Heart left ventricle (tissue), 16 donors: ENCODE measurements at regions of chr1 and their contacts with region 1.

Region 1: DNA sequence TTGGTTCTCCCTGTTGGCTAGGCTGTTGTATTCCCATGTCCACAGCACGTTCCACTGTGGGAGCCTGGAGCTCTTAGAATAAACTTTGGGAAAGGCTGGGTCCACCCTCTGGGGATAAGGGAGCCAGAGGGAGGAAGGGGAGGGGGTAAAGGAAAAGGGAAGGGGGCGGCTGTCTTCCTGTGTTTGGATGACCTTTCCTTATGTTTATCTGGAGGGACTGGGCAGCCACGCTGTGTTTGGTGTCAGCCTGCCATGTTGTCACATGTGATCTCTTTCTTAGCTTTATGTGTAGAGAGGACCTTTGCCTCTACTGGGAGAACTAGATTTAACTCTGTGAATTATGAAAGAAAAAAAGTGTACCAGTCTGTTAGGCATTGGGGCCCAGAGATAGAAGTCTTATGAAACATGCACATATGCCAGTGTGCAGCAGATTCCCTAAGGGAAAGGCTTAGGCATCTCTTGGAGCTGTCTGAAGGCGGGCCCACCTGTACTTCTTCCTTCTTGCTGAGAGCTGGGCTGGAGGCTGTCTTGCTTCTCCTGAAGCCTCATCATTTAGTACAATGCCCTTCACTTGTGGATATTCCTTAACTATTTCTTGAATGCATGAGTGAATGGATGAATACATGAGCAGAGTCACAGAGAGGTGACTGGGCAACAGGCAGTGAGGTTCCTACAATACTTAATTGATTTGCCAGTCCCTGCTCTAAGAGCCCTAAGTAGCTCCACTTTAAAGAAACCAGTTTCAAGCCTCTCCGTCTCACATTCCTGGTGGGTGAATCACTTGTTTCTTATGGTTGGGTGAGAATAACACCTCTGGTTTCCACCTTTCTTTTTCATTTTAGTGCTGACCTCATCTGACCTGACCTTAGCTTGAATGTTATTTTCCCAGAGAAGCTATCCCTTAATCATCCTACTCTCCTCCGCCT is 62.5 kb upstream of the ARHGAP29 start:
- DNase-seq: peak in 4 of 5 donors; percentile 35 to 55 (median 44)
- ATAC-seq: peak; percentile 47 to 73 (median 62)
- H3K4me3 ChIP-seq: no peak overlapping the region
- H3K27ac ChIP-seq: peak overlapping the region; percentile 57 to 88 (median 76)
- H3K4me1 ChIP-seq: peaks cover 2 to 79% (median 43%) of the 10 kb centered on the region in 12 donors
- H3K27me3 ChIP-seq: no peaks in the 10 kb centered on the region
- CTCF ChIP-seq: no peak
- POLR2A ChIP-seq: no peak

Region 2: DNA sequence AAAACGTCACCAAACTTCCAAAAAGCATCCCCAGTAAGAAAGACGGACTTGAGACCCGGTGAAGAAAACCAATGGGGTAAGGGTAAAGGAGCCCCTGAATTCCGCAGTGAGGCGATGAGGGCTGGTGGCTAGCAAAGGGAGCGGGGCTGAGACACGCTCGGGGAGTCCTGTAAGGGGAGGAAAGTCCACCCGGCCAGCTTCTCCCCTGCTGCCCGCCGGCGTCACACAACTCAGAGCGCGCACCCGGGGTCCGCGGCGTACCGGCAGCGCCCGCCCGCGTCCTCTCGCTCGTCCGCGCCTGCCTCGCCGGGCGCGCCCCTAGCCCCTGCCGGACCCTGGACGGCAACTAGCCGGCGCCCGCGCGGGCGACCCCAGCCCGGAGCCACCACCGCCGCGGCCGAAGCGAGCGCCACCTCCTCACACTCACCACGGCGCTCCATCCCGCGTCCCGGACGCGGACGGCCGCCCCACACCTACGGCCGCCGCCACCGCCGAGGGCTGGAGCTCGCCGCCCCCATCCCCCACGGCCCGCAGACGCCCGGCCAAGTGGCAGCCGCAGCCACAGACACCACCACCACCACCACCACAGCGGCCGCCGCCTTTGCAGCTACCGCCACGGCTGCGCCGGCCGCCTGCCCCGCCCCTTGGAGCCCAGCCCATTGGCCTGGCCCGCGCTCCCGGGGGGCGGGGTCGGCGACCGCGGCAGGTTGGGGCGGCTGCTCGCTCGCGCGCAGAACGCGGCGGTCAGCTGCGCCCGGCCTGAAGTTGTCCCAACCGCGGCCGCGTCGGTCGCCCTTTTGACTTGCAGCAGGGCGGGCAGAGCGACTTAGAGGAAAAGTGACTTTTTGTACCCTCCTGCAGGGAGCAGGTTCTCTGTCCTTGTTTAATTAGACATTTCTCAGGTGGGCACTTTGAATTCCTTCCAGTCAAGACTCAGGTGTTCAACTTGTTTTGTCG is 52.5 kb before region 1 on chr1:
- intact Hi-C with region 1: loop called in 5 of 10 experiments (anchors 2 to 5 kb)
- DNase-seq: peak; percentile 84 to 91 (median 88)
- ATAC-seq: peak; percentile 83 to 98 (median 94)
- H3K4me3 ChIP-seq: peak overlapping the region; percentile 54 to 98 (median 72)
- H3K27ac ChIP-seq: peak overlapping the region; percentile 78 to 95 (median 88)
- H3K4me1 ChIP-seq: peaks cover 0 to 15% (median 0%) of the 10 kb centered on the region in 12 donors
- H3K27me3 ChIP-seq: peaks cover 0 to 16% (median 0%) of the 10 kb centered on the region in 9 donors
- CTCF ChIP-seq: peak in 2 of 12 donors; percentile 9 to 26
- POLR2A ChIP-seq: peak in 1 of 2 donors; percentile 95

Region 3: GRCh38 chr1:94258873-94259331 is 41.0 kb before region 1 on chr1:
- intact Hi-C with region 1: loop called in 2 of 10 experiments (anchors 2 to 5 kb)
- DNase-seq: peak in 3 of 5 donors; percentile 22 to 66 (median 57)
- ATAC-seq: peak in 3 of 4 donors; percentile 68 to 92 (median 92)
- H3K4me3 ChIP-seq: no peak overlapping the region
- H3K27ac ChIP-seq: peak overlapping the region in 6 of 12 donors; percentile 1 to 68 (median 43)
- H3K4me1 ChIP-seq: peaks cover 0 to 25% (median 7%) of the 10 kb centered on the region in 12 donors
- H3K27me3 ChIP-seq: no peaks in the 10 kb centered on the region
- CTCF ChIP-seq: no peak
- POLR2A ChIP-seq: no peak

Region 4: DNA sequence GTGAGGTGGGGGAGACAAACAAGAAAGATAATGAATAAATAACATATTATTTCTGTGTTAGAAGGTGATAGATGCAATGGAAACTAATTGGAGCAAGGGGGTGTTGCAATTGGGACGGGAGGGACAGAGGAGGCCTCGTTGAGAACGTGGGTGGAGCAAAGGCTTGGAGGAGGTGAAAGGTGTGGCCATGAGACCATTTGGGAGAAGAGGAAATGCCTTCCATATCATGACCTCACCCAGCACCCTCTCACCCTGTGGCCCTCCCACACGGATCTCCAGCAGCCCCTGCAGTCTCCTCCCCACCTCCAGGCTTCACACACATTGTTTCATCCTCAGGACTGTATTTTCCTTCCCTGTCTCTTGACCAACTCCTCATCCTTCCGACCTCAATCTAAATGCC is 22.8 kb after region 1 on chr1:
- intact Hi-C with region 1: loop called in 2 of 10 experiments (anchors 2 kb)
- DNase-seq: no peak
- ATAC-seq: peak in 1 of 4 donors; percentile 19
- H3K4me3 ChIP-seq: no peak overlapping the region
- H3K27ac ChIP-seq: peak overlapping the region; percentile 5 to 81 (median 60)
- H3K4me1 ChIP-seq: peaks cover 6 to 82% (median 46%) of the 10 kb centered on the region in 12 donors
- H3K27me3 ChIP-seq: peaks cover 0 to 4% (median 0%) of the 10 kb centered on the region in 9 donors
- CTCF ChIP-seq: no peak
- POLR2A ChIP-seq: no peak

Region 5: GRCh38 chr1:94329986-94330385 is 30.1 kb after region 1 on chr1:
- intact Hi-C with region 1: loop called in 1 of 10 experiments (anchors 2 kb)
- DNase-seq: peak in 1 of 5 donors; percentile 22
- ATAC-seq: peak in 3 of 4 donors; percentile 6 to 46 (median 40)
- H3K4me3 ChIP-seq: peak overlapping the region in 5 of 12 donors; percentile 5 to 28 (median 13)
- H3K27ac ChIP-seq: peak overlapping the region in 10 of 12 donors; percentile 38 to 79 (median 76)
- H3K4me1 ChIP-seq: peaks cover 6 to 72% (median 52%) of the 10 kb centered on the region in 12 donors
- H3K27me3 ChIP-seq: peaks cover 0 to 18% (median 0%) of the 10 kb centered on the region in 9 donors
- CTCF ChIP-seq: peak in 11 of 12 donors; percentile 23 to 70 (median 54)
- POLR2A ChIP-seq: no peak